ENCODE measurements at regions of chr9 and their contacts with region 1.

Region 1: GRCh38 chr9:92634712-92635605 is 35.0 kb downstream of the IPPK start:
- DNase-seq: peak; percentile 8 to 87
- H3K4me3 ChIP-seq: no peak overlapping the region
- H3K27ac ChIP-seq: peak overlapping the region; percentile 26 to 37
- H3K4me1 ChIP-seq: peaks cover 0 to 20% of the 10 kb centered on the region in 2 donors
- H3K27me3 ChIP-seq: no peaks in the 10 kb centered on the region
- CTCF ChIP-seq: peak; percentile 90 to 95 (median 95)

Region 2: GRCh38 chr9:92293452-92294296 is 341.3 kb before region 1 on chr9 and contains the start of gene IARS1:
- intact Hi-C with region 1: loop called (anchors 1 kb)
- DNase-seq: peak; percentile 96 to 100
- H3K4me3 ChIP-seq: peak within 1 kb of the TSS; percentile 64 to 80
- H3K27ac ChIP-seq: peak within 1 kb of the TSS; percentile 54 to 67
- H3K4me1 ChIP-seq: peaks cover 8 to 12% of the 10 kb centered on the region in 2 donors
- H3K27me3 ChIP-seq: no peaks in the 10 kb centered on the region
- CTCF ChIP-seq: peak in 1 of 3 experiments; percentile 33
- total RNA-seq, gene IARS1: 44.4 TPM

Region 3: DNA sequence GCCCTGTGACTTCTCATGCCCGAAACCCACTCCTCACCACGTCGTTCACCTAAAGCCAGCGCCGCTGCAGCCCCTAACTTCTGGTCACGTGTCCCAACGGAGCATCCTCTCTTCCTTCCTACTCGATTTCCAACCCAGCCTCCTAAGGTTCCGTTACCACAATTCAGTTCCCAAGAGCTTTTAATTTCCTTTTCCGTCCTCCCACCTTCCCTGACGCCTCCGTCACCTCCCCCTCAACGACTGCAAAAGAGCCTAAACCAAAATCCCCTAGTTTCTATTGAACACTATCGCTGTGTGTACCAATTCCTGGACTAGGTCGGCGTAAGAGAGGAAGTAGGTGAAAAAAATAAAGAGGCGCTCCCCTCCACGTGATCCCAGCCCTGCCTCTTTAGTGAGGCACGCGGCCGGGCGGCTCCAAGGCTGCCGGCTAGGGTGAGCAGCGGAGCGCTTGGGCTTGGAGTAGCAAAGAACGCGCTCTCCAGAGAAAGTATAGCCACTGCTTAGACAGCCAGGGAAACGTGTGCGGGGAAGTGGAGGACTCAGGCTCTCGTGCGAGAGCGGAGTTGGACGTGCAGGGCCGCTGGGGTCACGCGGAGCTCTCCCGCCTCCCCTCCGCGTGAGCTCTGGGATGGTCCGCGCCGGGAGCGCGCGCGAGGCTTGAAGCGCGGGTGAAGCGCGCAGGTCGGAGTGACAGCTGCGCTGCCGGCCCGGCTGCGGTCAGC is 309.5 kb before region 1 on chr9 and contains the starts of genes CENPP and NOL8:
- intact Hi-C with region 1: loop called (anchors 1 kb)
- DNase-seq: peak; percentile 42 to 92
- H3K4me3 ChIP-seq: peak within 1 kb of the TSS; percentile 75 to 80
- H3K27ac ChIP-seq: peak within 1 kb of the TSS; percentile 93 to 97
- H3K4me1 ChIP-seq: peaks cover 0 to 16% of the 10 kb centered on the region in 2 donors
- H3K27me3 ChIP-seq: no peaks in the 10 kb centered on the region
- CTCF ChIP-seq: no peak
- total RNA-seq, gene CENPP: 0.43 TPM
- total RNA-seq, gene NOL8: 11.5 TPM

Region 4: DNA sequence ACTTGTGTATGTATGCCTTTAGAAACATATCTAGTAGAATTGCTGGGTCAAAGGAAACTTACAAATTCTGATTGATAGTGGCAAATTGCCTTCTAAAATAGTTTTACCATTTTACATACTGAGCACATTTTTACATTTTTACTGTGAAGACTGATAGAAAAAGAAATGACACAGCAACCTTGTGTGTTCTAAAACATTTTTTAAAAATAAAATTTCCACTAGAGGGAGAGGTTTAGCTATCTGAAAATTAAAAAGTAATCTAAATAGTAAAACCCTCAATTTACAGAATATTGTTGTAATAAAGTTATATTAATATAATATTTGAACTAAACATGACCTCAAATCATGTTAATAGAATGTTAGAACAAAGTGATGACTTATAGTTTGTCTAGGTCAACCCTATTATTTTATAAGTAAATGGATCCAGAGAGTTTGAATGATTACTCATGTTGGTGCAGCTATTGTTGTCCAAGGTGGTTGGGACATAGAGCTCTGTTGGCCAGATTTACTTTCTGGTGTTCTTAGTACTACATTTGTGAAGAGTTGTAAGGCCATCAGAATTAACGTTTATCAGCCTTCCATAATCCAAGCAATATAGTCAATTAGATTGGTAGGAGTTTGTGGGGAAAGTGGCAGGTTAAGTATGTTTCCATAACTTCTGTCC is 292.0 kb before region 1 on chr9:
- intact Hi-C with region 1: loop called (anchors 1 kb)
- DNase-seq: no peak
- H3K4me3 ChIP-seq: no peak overlapping the region
- H3K27ac ChIP-seq: peak overlapping the region; percentile 45 to 72
- H3K4me1 ChIP-seq: peaks cover 0 to 3% of the 10 kb centered on the region in 2 donors
- H3K27me3 ChIP-seq: no peaks in the 10 kb centered on the region
- CTCF ChIP-seq: peak; percentile 25 to 55 (median 34)

Region 5: DNA sequence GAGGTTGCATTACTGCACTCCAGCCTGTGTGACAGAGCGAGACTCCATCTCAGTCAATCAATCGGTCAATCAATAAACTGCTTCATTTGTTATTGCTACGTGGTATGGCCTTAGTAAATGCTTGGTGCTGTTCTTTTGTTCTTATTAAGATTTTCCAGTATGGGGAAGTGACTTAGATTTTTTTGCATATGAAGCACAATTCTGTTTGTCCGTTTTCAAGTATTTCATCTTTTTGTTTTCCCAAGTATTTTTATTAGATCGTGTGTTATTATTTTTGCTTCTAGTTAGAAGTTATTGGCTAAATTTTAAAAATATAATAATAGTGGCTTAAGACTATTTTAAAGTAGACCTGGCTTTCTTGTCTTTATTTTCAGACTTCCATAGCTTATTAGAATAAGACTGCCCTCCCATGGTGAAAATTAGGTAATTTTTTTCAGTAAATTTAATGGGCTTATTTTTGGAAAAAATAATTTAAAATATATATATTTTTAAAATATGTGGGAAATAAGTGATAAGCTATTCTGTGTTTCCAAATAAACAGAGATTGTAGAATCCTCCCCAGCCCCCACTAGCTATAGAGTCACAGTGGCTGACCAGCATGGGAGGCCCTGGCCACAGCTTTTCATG is 195.9 kb before region 1 on chr9:
- intact Hi-C with region 1: loop called (anchors 5 kb)
- DNase-seq: no peak
- H3K4me3 ChIP-seq: no peak overlapping the region
- H3K27ac ChIP-seq: no peak overlapping the region
- H3K4me1 ChIP-seq: peaks cover 0 to 14% of the 10 kb centered on the region in 2 donors
- H3K27me3 ChIP-seq: no peaks in the 10 kb centered on the region
- CTCF ChIP-seq: peak; percentile 18 to 55 (median 51)

Region 6: GRCh38 chr9:92501671-92502393 is 133.1 kb before region 1 on chr9:
- intact Hi-C with region 1: loop called (anchors 2 kb)
- DNase-seq: peak; percentile 21 to 86
- H3K4me3 ChIP-seq: no peak overlapping the region
- H3K27ac ChIP-seq: peak overlapping the region; percentile 60 to 76
- H3K4me1 ChIP-seq: peaks cover 23 to 36% of the 10 kb centered on the region in 2 donors
- H3K27me3 ChIP-seq: no peaks in the 10 kb centered on the region
- CTCF ChIP-seq: peak in 2 of 3 experiments; percentile 22 to 37

Region 7: GRCh38 chr9:92590377-92590776 is 44.6 kb before region 1 on chr9:
- intact Hi-C with region 1: loop called (anchors 5 kb)
- DNase-seq: peak in 1 of 2 donors; percentile 83
- H3K4me3 ChIP-seq: no peak overlapping the region
- H3K27ac ChIP-seq: peak overlapping the region; percentile 26 to 29
- H3K4me1 ChIP-seq: peaks cover 4 to 36% of the 10 kb centered on the region in 2 donors
- H3K27me3 ChIP-seq: no peaks in the 10 kb centered on the region
- CTCF ChIP-seq: no peak

Region 8: GRCh38 chr9:92747459-92748232 is 112.7 kb after region 1 on chr9:
- intact Hi-C with region 1: no loop called
- DNase-seq: no peak
- H3K4me3 ChIP-seq: no peak overlapping the region
- H3K27ac ChIP-seq: peak overlapping the region in 1 of 2 donors; percentile 17
- H3K4me1 ChIP-seq: peaks cover 10 to 25% of the 10 kb centered on the region in 2 donors
- H3K27me3 ChIP-seq: no peaks in the 10 kb centered on the region
- CTCF ChIP-seq: no peak

Measured in ascending aorta (tissue), 2 donors.